MCF 10A (cell line): ENCODE measurements at regions of chr20 and their contacts with region 1.

Region 1: GRCh38 chr20:39775110-39775509 is 813.0 kb downstream of the DHX35 start:
- DNase-seq: peak; percentile 91
- H3K4me3 Mint-ChIP-seq: no peak overlapping the region
- H3K27ac Mint-ChIP-seq: peak overlapping the region; percentile 5
- H3K4me1 Mint-ChIP-seq: peaks cover 21% of the 10 kb centered on the region
- H3K27me3 Mint-ChIP-seq: no peaks in the 10 kb centered on the region
- CTCF ChIP-seq: no peak

Region 2: DNA sequence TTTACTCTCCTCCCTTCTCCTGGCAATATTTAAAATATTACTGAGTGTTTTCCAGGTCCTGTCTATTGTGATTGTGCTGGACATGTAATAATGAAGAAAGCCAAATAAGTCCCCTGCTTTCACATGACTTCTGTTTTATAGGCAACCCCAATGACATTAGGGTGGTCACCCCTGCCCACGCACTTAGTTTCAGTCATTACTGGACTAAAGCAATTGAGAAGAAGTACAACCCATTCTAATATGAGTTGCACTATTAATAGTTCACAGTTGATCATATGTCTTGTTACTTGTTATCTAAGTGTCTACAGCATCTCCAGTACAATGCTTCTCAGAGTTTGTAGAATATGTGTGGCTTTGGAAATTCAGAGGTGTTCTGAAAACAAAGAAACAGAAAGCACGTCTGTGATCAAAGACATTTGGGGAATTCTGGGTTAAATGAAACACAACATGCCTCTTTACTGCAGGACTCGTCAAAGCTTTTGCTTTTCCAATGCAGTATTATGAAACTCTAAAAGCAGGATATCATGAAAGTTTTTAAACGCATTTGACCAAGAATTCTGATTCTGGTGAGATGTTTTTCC is 23.5 kb before region 1 on chr20:
- CTCF ChIA-PET with region 1: no interaction called
- POLR2A ChIA-PET with region 1: no interaction called
- intact Hi-C with region 1: no loop called
- DNase-seq: no peak
- H3K4me3 Mint-ChIP-seq: no peak overlapping the region
- H3K27ac Mint-ChIP-seq: no peak overlapping the region
- H3K4me1 Mint-ChIP-seq: no peaks in the 10 kb centered on the region
- H3K27me3 Mint-ChIP-seq: no peaks in the 10 kb centered on the region
- CTCF ChIP-seq: no peak

Region 3: GRCh38 chr20:39785252-39785917 is 10.3 kb after region 1 on chr20:
- CTCF ChIA-PET with region 1: interaction called, 4 read pairs
- POLR2A ChIA-PET with region 1: interaction called, 15 read pairs
- intact Hi-C with region 1: no loop called
- DNase-seq: no peak
- H3K4me3 Mint-ChIP-seq: no peak overlapping the region
- H3K27ac Mint-ChIP-seq: no peak overlapping the region
- H3K4me1 Mint-ChIP-seq: no peaks in the 10 kb centered on the region
- H3K27me3 Mint-ChIP-seq: no peaks in the 10 kb centered on the region
- CTCF ChIP-seq: no peak